Activated CD4-positive, alpha-beta memory T cell treated with anti-CD3 and anti-CD28 coated beads, Interleukin-2, amount 10 ng/mL, durations not matched to agents 7 days and 5 days (primary cell): ENCODE measurements at regions of chr22 and their contacts with region 1.

Region 1: DNA sequence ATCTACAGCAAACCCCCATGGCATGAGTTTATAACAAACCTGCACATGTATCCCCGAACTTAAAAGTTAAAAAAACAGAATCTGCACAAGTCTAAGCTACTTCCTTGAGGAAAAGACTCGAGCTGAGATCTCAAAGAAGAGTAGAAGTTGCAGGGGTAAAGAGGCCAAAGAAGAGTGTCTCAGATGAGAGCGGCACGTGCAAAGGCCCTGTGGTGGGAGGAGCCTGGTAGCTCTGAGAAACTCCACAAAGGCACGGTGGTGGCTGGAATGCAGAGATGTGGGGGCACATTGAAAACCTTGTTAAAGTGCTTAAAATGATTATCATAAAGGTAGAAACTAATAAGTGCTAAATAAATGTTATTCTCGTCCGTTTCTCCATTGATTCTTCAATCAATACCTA is 103.2 kb upstream of the GRK3 start:
- DNase-seq: no peak
- H3K4me3 Mint-ChIP-seq: no peak overlapping the region
- H3K27ac Mint-ChIP-seq: no peak overlapping the region
- H3K4me1 Mint-ChIP-seq: peaks cover 14% of the 10 kb centered on the region
- H3K27me3 Mint-ChIP-seq: no peaks in the 10 kb centered on the region

Region 2: GRCh38 chr22:25447686-25448434 is 13.4 kb before region 1 on chr22:
- CTCF ChIA-PET with region 1: interaction called, 10 read pairs
- POLR2A ChIA-PET with region 1: no interaction called
- DNase-seq: peak; percentile 93
- H3K4me3 Mint-ChIP-seq: peak overlapping the region; percentile 88
- H3K27ac Mint-ChIP-seq: peak overlapping the region; percentile 77
- H3K4me1 Mint-ChIP-seq: peaks cover 44% of the 10 kb centered on the region
- H3K27me3 Mint-ChIP-seq: no peaks in the 10 kb centered on the region

Region 3: DNA sequence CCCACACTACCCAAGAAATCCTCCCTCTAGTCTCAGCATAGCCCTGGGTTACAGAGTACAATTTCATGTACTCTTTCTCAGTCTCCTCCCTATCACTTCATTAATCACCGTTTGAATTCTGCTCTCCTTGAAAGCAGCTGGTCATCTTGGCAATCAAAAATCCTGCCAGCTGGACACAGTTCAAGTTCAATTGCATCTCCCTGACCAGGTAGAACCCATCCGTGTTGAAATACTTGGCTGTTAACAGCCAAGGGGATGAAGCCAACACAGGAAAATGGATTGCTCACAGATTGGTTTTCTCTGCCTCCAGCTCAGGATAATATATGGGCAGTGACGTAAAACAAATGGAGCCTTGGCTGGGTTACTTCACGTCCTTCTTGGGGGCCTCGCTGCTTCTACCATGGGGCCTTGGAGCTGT is 48.1 kb after region 1 on chr22:
- CTCF ChIA-PET with region 1: no interaction called
- POLR2A ChIA-PET with region 1: no interaction called
- DNase-seq: no peak
- H3K4me3 Mint-ChIP-seq: no peak overlapping the region
- H3K27ac Mint-ChIP-seq: no peak overlapping the region
- H3K4me1 Mint-ChIP-seq: no peaks in the 10 kb centered on the region
- H3K27me3 Mint-ChIP-seq: no peaks in the 10 kb centered on the region